MCF 10A (cell line): ENCODE measurements at regions of chrX and their contacts with region 1.

Region 1: GRCh38 chrX:48897621-48898306 is at the starts of genes PQBP1 and TIMM17B:
- DNase-seq: peak; percentile 95
- H3K4me3 Mint-ChIP-seq: peak within 1 kb of the TSS; percentile 82
- H3K27ac Mint-ChIP-seq: peak within 1 kb of the TSS; percentile 96
- H3K4me1 Mint-ChIP-seq: no peaks in the 10 kb centered on the region
- H3K27me3 Mint-ChIP-seq: no peaks in the 10 kb centered on the region
- CTCF ChIP-seq: no peak
- total RNA-seq, gene PQBP1: 126 and 150 TPM in 2 replicates
- total RNA-seq, gene TIMM17B: 70.6 and 73.7 TPM in 2 replicates

Region 2: DNA sequence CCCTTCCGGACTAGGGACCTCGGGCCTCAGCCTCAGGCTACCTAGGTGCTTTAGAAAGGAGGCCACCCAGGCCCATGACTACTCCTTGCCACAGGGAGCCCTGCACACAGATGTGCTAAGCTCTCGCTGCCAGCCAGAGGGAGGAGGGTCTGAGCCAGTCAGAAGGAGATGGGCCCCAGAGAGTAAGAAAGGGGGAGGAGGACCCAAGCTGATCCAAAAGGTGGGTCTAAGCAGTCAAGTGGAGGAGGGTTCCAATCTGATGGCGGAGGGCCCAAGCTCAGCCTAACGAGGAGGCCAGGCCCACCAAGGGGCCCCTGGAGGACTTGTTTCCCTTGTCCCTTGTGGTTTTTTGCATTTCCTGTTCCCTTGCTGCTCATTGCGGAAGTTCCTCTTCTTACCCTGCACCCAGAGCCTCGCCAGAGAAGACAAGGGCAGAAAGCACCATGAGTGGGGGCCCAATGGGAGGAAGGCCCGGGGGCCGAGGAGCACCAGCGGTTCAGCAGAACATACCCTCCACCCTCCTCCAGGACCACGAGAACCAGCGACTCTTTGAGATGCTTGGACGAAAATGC is 214.3 kb before region 1 on chrX and contains the start of gene WAS:
- CTCF ChIA-PET with region 1: no interaction called
- POLR2A ChIA-PET with region 1: no interaction called
- intact Hi-C with region 1: no loop called
- DNase-seq: no peak
- H3K4me3 Mint-ChIP-seq: no peak within 1 kb of the TSS
- H3K27ac Mint-ChIP-seq: no peak within 1 kb of the TSS
- H3K4me1 Mint-ChIP-seq: no peaks in the 10 kb centered on the region
- H3K27me3 Mint-ChIP-seq: peaks cover 41% of the 10 kb centered on the region
- CTCF ChIP-seq: no peak
- total RNA-seq, gene WAS: 0.37 and 0.96 TPM in 2 replicates

Region 3: GRCh38 chrX:48801280-48802088 is 96.3 kb before region 1 on chrX and contains the start of gene HDAC6:
- CTCF ChIA-PET with region 1: no interaction called
- POLR2A ChIA-PET with region 1: interaction called, 10 read pairs
- intact Hi-C with region 1: no loop called
- DNase-seq: peak; percentile 97
- H3K4me3 Mint-ChIP-seq: peak within 1 kb of the TSS; percentile 92
- H3K27ac Mint-ChIP-seq: peak within 1 kb of the TSS; percentile 100
- H3K4me1 Mint-ChIP-seq: peaks cover 5% of the 10 kb centered on the region
- H3K27me3 Mint-ChIP-seq: no peaks in the 10 kb centered on the region
- CTCF ChIP-seq: no peak
- total RNA-seq, gene HDAC6: 45.1 and 53.2 TPM in 2 replicates

Region 4: GRCh38 chrX:48854898-48855297 is 42.9 kb before region 1 on chrX:
- CTCF ChIA-PET with region 1: interaction called, 3 read pairs
- POLR2A ChIA-PET with region 1: interaction called, 4 read pairs
- intact Hi-C with region 1: loop called (anchors 1 kb)
- DNase-seq: peak; percentile 11
- H3K4me3 Mint-ChIP-seq: peak overlapping the region; percentile 24
- H3K27ac Mint-ChIP-seq: peak overlapping the region; percentile 29
- H3K4me1 Mint-ChIP-seq: peaks cover 7% of the 10 kb centered on the region
- H3K27me3 Mint-ChIP-seq: no peaks in the 10 kb centered on the region
- CTCF ChIP-seq: peak; percentile 37

Region 5: DNA sequence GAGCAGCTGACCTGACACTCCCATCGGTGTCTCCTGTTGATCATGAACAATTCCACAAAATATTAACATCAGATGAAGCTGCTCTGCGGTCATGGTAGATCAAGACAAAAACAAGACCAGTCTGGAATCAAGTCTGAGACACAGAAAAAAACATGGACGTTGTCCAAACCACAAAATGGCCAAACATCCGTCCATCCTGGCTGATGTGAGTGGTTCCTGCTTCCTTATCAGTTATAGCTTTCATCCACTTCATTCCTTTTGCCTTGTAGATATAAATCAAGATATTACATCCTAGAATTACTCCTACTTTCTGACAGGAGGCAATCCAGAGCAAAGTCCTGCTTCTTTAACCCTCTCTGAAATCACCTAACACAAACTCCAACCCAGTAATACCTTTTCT is 33.6 kb before region 1 on chrX:
- CTCF ChIA-PET with region 1: interaction called, 3 read pairs
- POLR2A ChIA-PET with region 1: interaction called, 17 read pairs
- intact Hi-C with region 1: no loop called
- DNase-seq: peak; percentile 14
- H3K4me3 Mint-ChIP-seq: no peak overlapping the region
- H3K27ac Mint-ChIP-seq: no peak overlapping the region
- H3K4me1 Mint-ChIP-seq: peaks cover 18% of the 10 kb centered on the region
- H3K27me3 Mint-ChIP-seq: no peaks in the 10 kb centered on the region
- CTCF ChIP-seq: no peak

Region 6: DNA sequence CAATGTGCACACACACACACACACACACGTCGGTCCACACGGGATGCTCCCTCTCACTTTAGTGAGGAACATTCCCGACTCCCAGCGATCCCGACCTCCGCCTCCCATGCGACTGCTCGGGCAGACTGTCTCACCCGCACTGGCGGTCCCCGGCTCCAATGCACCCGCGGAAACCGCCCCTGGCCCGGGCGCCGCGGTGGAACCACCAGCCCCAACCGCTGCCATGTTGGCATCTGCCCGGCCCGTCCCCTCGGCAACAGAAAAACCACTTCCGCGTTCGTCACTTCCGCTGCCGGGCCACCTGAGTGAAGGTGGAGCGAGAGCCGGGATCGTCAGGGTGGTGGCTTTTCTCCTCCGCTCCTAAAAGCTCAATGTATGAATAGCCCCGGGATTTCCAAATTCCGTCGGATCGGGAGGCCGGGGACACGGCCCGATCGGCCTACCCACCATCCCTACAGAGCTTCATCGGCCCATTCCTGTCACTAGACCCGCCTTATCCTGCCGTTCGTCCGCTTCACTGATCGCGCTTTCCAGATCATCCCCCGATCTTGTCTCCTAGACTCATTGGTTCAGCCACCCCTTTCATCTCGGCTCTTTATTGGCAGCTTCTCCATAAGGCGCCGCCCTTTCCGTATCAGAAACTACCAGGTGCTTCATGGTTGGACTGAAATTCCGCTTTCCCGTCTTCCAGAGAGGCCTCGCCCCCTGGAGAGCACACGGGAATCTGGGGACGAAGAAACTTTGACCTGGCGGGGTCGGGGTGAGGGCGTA is 13.8 kb after region 1 on chrX and contains the start of gene SLC35A2:
- CTCF ChIA-PET with region 1: interaction called, 7 read pairs
- POLR2A ChIA-PET with region 1: interaction called, 57 read pairs
- intact Hi-C with region 1: no loop called
- DNase-seq: peak; percentile 79
- H3K4me3 Mint-ChIP-seq: peak within 1 kb of the TSS; percentile 91
- H3K27ac Mint-ChIP-seq: peak within 1 kb of the TSS; percentile 99
- H3K4me1 Mint-ChIP-seq: peaks cover 17% of the 10 kb centered on the region
- H3K27me3 Mint-ChIP-seq: no peaks in the 10 kb centered on the region
- CTCF ChIP-seq: no peak
- total RNA-seq, gene SLC35A2: 38.6 and 43.5 TPM in 2 replicates